ENCODE measurements at regions of chr10 and their contacts with region 1.

Region 1: GRCh38 chr10:102009801-102010425 is 46.1 kb downstream of the ARMH3 start:
- DNase-seq: no peak
- H3K4me3 ChIP-seq: no peak overlapping the region
- H3K27ac ChIP-seq: no peak overlapping the region
- H3K4me1 ChIP-seq: peaks cover 0 to 7% (median 5%) of the 10 kb centered on the region in 4 donors
- H3K27me3 ChIP-seq: no peaks in the 10 kb centered on the region
- CTCF ChIP-seq: peak; percentile 89 to 96 (median 95)
- EP300 ChIP-seq: no peak
- POLR2A ChIP-seq: no peak

Region 2: DNA sequence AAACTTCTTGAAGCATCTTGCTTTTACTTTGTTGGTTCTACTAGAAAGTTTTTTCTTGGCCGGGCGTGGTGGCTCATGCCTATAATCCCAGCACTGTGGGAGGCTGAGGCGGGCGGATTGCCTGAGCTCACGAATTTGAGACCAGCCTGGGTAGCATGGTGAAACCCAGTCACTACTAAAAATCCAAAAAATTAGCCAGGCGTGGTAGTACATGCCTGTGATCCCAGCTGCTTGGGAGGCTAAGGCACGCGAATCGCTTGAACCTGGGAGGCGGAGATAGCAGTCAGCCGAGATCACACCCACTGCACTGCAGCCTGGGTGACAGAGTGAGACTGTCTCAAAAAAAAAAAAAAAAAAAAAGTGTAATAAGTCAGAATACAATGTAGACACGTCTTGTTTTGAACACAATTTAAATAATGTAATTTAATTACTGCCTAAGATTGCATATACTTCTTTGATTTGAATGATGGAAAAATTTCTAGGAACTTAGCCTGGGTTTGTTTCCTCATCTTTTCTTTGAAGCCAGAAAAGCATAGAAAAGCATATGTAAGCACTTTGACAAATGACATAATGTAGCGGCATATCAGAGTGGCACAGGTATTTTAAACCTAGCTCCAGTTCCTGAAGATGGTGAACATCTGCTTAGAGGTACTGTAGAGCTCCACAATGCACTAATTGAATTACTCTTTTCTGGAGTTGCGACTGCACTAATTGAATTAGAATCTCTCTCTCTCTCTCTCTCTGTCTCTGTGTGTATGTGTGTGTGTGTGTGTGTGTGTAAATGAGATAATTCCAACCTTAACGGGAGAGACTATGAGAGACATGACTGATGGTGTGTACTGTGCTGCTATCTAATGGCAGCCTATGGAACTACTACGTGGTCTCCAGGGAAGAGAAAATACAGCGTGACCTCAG is 568.1 kb before region 1 on chr10:
- intact Hi-C with region 1: no loop called
- DNase-seq: no peak
- H3K4me3 ChIP-seq: no peak overlapping the region
- H3K27ac ChIP-seq: no peak overlapping the region
- H3K4me1 ChIP-seq: peaks cover 0 to 14% (median 6%) of the 10 kb centered on the region in 4 donors
- H3K27me3 ChIP-seq: no peaks in the 10 kb centered on the region
- CTCF ChIP-seq: peak; percentile 45 to 56 (median 55)
- EP300 ChIP-seq: no peak
- POLR2A ChIP-seq: no peak

Region 3: DNA sequence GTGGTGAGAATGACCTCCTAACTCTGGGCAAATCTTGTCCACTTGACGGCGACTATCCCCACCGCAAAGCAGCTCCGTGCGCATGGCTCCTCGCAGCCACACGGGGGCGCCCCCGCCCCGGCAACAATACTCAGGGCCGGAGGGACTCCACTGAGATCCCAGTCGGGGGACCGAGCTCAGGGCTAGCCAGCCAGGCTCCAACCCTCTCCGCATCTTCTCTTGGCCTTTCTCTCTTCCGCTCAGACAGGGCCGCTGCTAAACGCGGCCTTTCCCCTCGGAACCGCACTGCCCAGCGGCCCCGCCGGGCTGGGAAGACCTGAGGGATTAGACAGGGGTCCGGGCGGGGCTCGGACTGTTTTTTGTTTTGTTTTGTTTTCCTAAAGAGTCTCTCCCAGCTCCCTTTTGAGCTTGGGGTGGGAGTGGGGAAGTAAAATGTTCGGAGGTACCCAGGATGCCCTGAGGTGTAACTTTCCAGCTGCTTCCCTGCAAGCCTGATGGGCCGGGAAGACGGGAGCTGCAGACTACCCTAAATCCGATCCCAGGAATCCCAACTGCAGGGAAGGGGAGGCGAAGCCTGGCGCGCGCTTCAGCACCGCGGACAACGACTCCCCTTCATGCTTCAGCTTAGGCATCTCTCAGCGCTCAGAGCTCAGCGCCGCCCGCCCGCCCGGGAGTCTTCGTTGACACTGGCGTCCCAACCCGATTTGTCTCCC is 169.0 kb before region 1 on chr10:
- intact Hi-C with region 1: loop called (anchors 2 kb)
- DNase-seq: no peak
- H3K4me3 ChIP-seq: peak overlapping the region; percentile 41 to 46 (median 42)
- H3K27ac ChIP-seq: no peak overlapping the region
- H3K4me1 ChIP-seq: peaks cover 28 to 57% (median 42%) of the 10 kb centered on the region in 4 donors
- H3K27me3 ChIP-seq: peaks cover 0 to 8% (median 0%) of the 10 kb centered on the region in 4 donors
- CTCF ChIP-seq: peak; percentile 73 to 89 (median 76)
- EP300 ChIP-seq: no peak
- POLR2A ChIP-seq: no peak

Region 4: GRCh38 chr10:101887775-101888174 is 122.1 kb before region 1 on chr10:
- intact Hi-C with region 1: loop called (anchors 2 kb)
- DNase-seq: no peak
- H3K4me3 ChIP-seq: no peak overlapping the region
- H3K27ac ChIP-seq: no peak overlapping the region
- H3K4me1 ChIP-seq: peaks cover 0 to 17% (median 4%) of the 10 kb centered on the region in 4 donors
- H3K27me3 ChIP-seq: no peaks in the 10 kb centered on the region
- CTCF ChIP-seq: no peak
- EP300 ChIP-seq: no peak
- POLR2A ChIP-seq: no peak

Region 5: GRCh38 chr10:102262744-102263370 is 252.9 kb after region 1 on chr10:
- intact Hi-C with region 1: no loop called
- DNase-seq: no peak
- H3K4me3 ChIP-seq: no peak overlapping the region
- H3K27ac ChIP-seq: peak overlapping the region in 1 of 4 donors; percentile 10
- H3K4me1 ChIP-seq: peaks cover 21 to 52% (median 34%) of the 10 kb centered on the region in 4 donors
- H3K27me3 ChIP-seq: no peaks in the 10 kb centered on the region
- CTCF ChIP-seq: no peak
- EP300 ChIP-seq: no peak
- POLR2A ChIP-seq: no peak